B cell (primary cell): ENCODE measurements at regions of chr12 and their contacts with region 1.

Region 1: DNA sequence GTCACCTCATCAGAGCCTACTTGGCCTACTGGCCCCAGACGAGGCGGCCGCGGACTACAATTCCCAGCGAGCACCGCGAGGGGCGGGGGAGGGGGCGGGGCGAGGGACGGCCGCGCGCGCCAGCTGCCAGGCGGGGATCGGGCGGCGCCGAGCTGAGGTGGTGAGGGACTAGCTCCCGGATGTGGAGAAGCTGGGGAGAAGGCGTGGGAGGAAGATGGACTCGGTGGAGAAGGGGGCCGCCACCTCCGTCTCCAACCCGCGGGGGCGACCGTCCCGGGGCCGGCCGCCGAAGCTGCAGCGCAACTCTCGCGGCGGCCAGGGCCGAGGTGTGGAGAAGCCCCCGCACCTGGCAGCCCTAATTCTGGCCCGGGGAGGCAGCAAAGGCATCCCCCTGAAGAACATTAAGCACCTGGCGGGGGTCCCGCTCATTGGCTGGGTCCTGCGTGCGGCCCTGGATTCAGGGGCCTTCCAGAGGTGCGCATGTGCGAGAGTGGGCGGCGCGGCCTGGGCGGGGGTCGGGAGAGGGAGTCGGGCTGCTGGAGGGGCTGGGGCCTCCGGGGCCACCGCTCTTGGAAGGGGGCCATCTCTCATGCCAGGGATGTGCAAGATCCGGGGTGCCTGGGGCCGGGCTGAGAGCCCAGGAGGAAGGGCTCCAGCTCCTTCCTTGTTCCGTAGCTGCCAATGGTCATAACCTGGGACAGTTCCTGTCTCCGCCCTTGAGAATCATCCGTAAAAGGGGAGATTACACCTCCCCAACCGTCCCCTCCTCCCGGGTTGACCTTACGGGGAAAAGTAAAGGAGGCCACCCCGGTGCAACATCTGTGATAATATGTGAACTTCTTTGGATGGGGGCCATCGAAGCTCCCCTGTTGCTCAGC is at the start of gene CMAS:
- DNase-seq: peak; percentile 77
- ATAC-seq: peak; percentile 89
- H3K4me3 ChIP-seq: peak within 1 kb of the TSS; percentile 48 to 95 (median 93)
- H3K4me3 Mint-ChIP-seq: peak within 1 kb of the TSS; percentile 95
- H3K27ac ChIP-seq: peak within 1 kb of the TSS; percentile 13 to 69
- H3K27ac Mint-ChIP-seq: peak within 1 kb of the TSS; percentile 81
- H3K4me1 ChIP-seq: peaks cover 5 to 6% of the 10 kb centered on the region in 2 donors
- H3K4me1 Mint-ChIP-seq: peaks cover 23% of the 10 kb centered on the region
- H3K27me3 ChIP-seq: no peaks in the 10 kb centered on the region
- H3K27me3 Mint-ChIP-seq: peaks cover 9% of the 10 kb centered on the region
- CTCF ChIP-seq: no peak
- total RNA-seq, gene CMAS: 16.1 and 19.1 TPM in 2 replicates

Region 2: GRCh38 chr12:22083167-22083566 is 36.8 kb after region 1 on chr12:
- CTCF ChIA-PET with region 1: no interaction called
- POLR2A ChIA-PET with region 1: no interaction called
- intact Hi-C with region 1: no loop called
- DNase-seq: peak; percentile 56
- ATAC-seq: no peak
- H3K4me3 ChIP-seq: no peak overlapping the region
- H3K4me3 Mint-ChIP-seq: no peak overlapping the region
- H3K27ac ChIP-seq: no peak overlapping the region
- H3K27ac Mint-ChIP-seq: no peak overlapping the region
- H3K4me1 ChIP-seq: no peaks in the 10 kb centered on the region
- H3K4me1 Mint-ChIP-seq: no peaks in the 10 kb centered on the region
- H3K27me3 ChIP-seq: no peaks in the 10 kb centered on the region
- H3K27me3 Mint-ChIP-seq: peaks cover 2% of the 10 kb centered on the region
- CTCF ChIP-seq: peak; percentile 70

Region 3: DNA sequence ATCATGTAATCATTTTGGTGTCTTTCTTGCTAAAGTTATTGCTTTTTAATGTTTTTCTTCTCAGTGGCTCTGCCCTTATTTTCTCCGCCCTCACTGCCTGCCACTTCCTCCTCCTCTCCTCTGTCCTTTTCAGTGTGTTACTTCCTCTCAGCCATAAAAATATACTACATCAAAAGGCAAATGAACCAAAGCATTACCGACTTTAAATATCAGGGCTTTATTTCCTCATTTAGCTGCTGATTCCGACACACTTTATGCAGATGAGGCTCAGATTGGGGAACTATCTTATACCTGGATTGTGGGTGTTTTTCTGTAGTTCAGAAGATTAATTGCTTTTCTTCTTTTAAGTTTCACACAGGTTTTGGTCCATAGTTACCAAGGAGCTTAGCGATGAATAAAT is 117.8 kb after region 1 on chr12:
- CTCF ChIA-PET with region 1: no interaction called
- POLR2A ChIA-PET with region 1: no interaction called
- intact Hi-C with region 1: loop called (anchors 5 kb)
- DNase-seq: peak; percentile 82
- ATAC-seq: peak; percentile 90
- H3K4me3 ChIP-seq: peak overlapping the region in 2 of 5 experiments; percentile 2 to 18
- H3K4me3 Mint-ChIP-seq: peak overlapping the region; percentile 42
- H3K27ac ChIP-seq: peak overlapping the region; percentile 69 to 83
- H3K27ac Mint-ChIP-seq: peak overlapping the region; percentile 64
- H3K4me1 ChIP-seq: peaks cover 27% of the 10 kb centered on the region in 2 donors
- H3K4me1 Mint-ChIP-seq: peaks cover 34% of the 10 kb centered on the region
- H3K27me3 ChIP-seq: no peaks in the 10 kb centered on the region
- H3K27me3 Mint-ChIP-seq: no peaks in the 10 kb centered on the region
- CTCF ChIP-seq: no peak

Region 4: DNA sequence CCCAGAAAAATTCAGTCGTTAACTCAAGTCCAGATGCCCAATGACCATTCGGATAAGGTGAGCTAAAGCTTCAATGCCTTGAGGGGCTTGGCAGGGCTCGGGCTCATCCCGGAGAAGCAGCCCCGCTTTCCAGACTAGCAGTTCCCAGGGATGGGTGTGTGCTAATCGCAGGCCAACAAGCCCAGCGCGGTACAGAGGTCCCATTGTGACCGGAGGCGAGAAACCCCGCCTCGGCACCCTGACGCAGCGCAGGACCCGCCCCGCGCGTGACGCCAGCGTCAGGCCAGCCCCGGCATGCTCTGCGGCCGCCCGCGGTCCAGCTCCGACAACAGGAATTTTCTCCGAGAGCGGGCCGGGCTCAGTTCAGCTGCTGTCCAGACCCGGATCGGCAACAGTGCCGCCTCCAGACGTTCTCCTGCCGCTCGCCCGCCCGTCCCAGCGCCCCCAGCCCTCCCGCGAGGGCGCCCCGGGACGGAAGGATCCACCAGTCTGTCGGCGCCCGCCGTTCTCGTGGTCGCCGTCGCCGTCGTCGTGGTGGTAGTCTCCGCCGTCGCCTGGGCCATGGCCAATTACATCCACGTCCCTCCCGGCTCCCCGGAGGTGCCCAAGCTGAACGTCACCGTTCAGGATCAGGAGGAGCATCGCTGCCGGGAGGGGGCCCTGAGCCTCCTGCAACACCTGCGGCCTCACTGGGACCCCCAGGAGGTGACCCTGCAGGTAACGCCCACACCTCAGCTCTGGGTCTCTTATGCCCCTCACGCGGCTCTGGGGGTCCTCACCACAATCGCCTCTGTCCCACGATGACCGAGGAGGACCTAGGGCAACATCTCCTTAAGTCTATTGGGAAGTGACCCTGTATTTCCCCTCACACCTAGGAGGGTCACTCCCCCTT is 578.8 kb after region 1 on chr12 and contains the start of gene ETNK1:
- CTCF ChIA-PET with region 1: no interaction called
- POLR2A ChIA-PET with region 1: no interaction called
- intact Hi-C with region 1: loop called (anchors 1 kb)
- DNase-seq: peak; percentile 88
- ATAC-seq: peak; percentile 99
- H3K4me3 ChIP-seq: peak within 1 kb of the TSS; percentile 75 to 97 (median 90)
- H3K4me3 Mint-ChIP-seq: peak within 1 kb of the TSS; percentile 100
- H3K27ac ChIP-seq: peak within 1 kb of the TSS; percentile 87 to 97
- H3K27ac Mint-ChIP-seq: peak within 1 kb of the TSS; percentile 96
- H3K4me1 ChIP-seq: peaks cover 14 to 36% of the 10 kb centered on the region in 2 donors
- H3K4me1 Mint-ChIP-seq: peaks cover 43% of the 10 kb centered on the region
- H3K27me3 ChIP-seq: peaks cover 0 to 6% (median 0%) of the 10 kb centered on the region in 4 experiments
- H3K27me3 Mint-ChIP-seq: peaks cover 10% of the 10 kb centered on the region
- CTCF ChIP-seq: no peak
- total RNA-seq, gene ETNK1: 91.8 and 106 TPM in 2 replicates